ENCODE measurements at regions of chr17 and their contacts with region 1.

Region 1: GRCh38 chr17:70184770-70185169 is 15.4 kb downstream of the KCNJ2 start:
- DNase-seq: no peak
- H3K4me3 ChIP-seq: no peak overlapping the region
- H3K27me3 ChIP-seq: no peaks in the 10 kb centered on the region; the same call in 1 of the 2 replicates
- CTCF ChIP-seq: no peak

Region 2: GRCh38 chr17:69761751-69762321 is 422.9 kb before region 1 on chr17:
- CTCF ChIA-PET with region 1: no interaction called
- POLR2A ChIA-PET with region 1: no interaction called
- DNase-seq: peak; percentile 98
- H3K4me3 ChIP-seq: no peak overlapping the region
- H3K27me3 ChIP-seq: no peaks in the 10 kb centered on the region
- CTCF ChIP-seq: no peak

Region 3: GRCh38 chr17:70168977-70169708 is 15.6 kb before region 1 on chr17 and contains the start of gene KCNJ2:
- CTCF ChIA-PET with region 1: no interaction called
- POLR2A ChIA-PET with region 1: interaction called, 11 read pairs
- DNase-seq: peak; percentile 26
- H3K4me3 ChIP-seq: peak within 1 kb of the TSS; percentile 49
- H3K27me3 ChIP-seq: no peaks in the 10 kb centered on the region; the same call in 1 of the 2 replicates
- CTCF ChIP-seq: no peak
- polyA plus RNA-seq, gene KCNJ2: 1.2 and 2.1 TPM in 2 replicates